Endothelial cell of umbilical vein (primary cell): ENCODE measurements at regions of chr6 and their contacts with region 1.

Region 1: GRCh38 chr6:44925100-44925739 is 402.9 kb upstream of the RUNX2 start:
- DNase-seq: peak; percentile 59
- H3K4me3 ChIP-seq: no peak overlapping the region
- H3K27ac ChIP-seq: no peak overlapping the region
- H3K4me1 ChIP-seq: no peaks in the 10 kb centered on the region
- H3K27me3 ChIP-seq: no peaks in the 10 kb centered on the region
- CTCF ChIP-seq: no peak
- POLR2A ChIP-seq: no peak

Region 2: GRCh38 chr6:43308101-43308989 is 1616.9 kb before region 1 on chr6 and contains the start of gene CRIP3:
- CTCF ChIA-PET with region 1: no interaction called
- POLR2A ChIA-PET with region 1: no interaction called
- dilution Hi-C with region 1: no loop called
- intact Hi-C with region 1: no loop called
- DNase-seq: no peak
- H3K4me3 ChIP-seq: peak within 1 kb of the TSS in 1 of 3 experiments; percentile 15
- H3K27ac ChIP-seq: no peak within 1 kb of the TSS
- H3K4me1 ChIP-seq: peaks cover 8% of the 10 kb centered on the region
- H3K27me3 ChIP-seq: peaks cover 11 to 14% of the 10 kb centered on the region in 2 experiments
- CTCF ChIP-seq: peak in 1 of 2 donors; percentile 25
- POLR2A ChIP-seq: no peak
- total RNA-seq, gene CRIP3: not detected in 2 replicates

Region 3: DNA sequence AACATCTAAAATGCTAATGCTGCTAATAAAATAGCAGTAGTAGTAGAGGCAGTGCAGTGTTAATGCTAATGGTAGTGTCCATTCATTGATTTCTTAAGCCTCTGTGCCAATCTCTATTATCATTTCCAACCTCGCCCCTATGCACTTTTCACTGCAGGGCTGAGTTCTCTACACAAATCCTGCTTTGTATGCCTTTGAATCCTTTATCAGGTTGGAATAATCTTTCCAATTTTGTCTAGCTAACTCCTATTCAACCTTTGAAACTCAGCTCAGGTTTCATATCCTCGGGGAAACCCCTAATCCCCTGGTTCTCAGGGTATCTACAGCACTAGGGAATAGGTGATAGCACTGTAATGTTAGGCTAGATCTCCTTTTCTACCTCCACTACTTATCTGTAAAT is 118.9 kb after region 1 on chr6:
- CTCF ChIA-PET with region 1: no interaction called
- POLR2A ChIA-PET with region 1: interaction called, 11 read pairs
- dilution Hi-C with region 1: no loop called
- intact Hi-C with region 1: no loop called
- DNase-seq: no peak
- H3K4me3 ChIP-seq: no peak overlapping the region
- H3K27ac ChIP-seq: no peak overlapping the region
- H3K4me1 ChIP-seq: peaks cover 4% of the 10 kb centered on the region
- H3K27me3 ChIP-seq: no peaks in the 10 kb centered on the region
- CTCF ChIP-seq: no peak
- POLR2A ChIP-seq: no peak